ENCODE measurements at regions of chr11 and their contacts with region 1.

Region 1: GRCh38 chr11:18243783-18244362 is 4.6 kb downstream of the SAA2 start:
- DNase-seq: peak; percentile 19
- H3K4me3 ChIP-seq: no peak overlapping the region
- CTCF ChIP-seq: peak; percentile 85

Region 2: GRCh38 chr11:18229501-18229900 is 14.4 kb before region 1 on chr11:
- CTCF ChIA-PET with region 1: interaction called, 11 read pairs
- POLR2A ChIA-PET with region 1: no interaction called
- DNase-seq: no peak
- H3K4me3 ChIP-seq: no peak overlapping the region
- CTCF ChIP-seq: no peak

Region 3: DNA sequence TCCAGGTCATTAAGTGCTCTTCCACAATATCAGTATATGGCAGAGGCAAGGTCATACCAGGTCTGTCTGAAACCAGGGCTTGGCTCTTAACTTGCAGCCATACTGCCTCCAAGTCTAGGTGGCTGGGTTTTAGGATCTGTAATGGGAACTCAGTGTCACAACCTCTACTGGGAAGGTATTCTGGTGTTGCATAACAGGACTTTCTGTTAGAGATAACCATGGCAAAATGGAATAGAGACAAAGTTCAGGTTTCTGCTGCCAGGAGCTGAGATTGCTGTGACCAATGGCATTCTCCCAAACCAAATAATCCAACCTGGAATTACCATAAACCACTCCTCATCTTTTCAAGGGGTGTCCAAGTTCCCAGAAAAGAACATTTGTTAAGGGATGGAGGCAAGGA is 15.4 kb after region 1 on chr11:
- CTCF ChIA-PET with region 1: interaction called, 10 read pairs
- POLR2A ChIA-PET with region 1: no interaction called
- DNase-seq: no peak
- H3K4me3 ChIP-seq: no peak overlapping the region
- CTCF ChIP-seq: no peak

Region 4: GRCh38 chr11:18419040-18419439 is 175.2 kb after region 1 on chr11:
- CTCF ChIA-PET with region 1: no interaction called
- POLR2A ChIA-PET with region 1: no interaction called
- DNase-seq: no peak
- H3K4me3 ChIP-seq: no peak overlapping the region
- CTCF ChIP-seq: no peak